Psoas muscle (tissue), 8 donors: ENCODE measurements at regions of chr12 and their contacts with region 1.

Region 1: DNA sequence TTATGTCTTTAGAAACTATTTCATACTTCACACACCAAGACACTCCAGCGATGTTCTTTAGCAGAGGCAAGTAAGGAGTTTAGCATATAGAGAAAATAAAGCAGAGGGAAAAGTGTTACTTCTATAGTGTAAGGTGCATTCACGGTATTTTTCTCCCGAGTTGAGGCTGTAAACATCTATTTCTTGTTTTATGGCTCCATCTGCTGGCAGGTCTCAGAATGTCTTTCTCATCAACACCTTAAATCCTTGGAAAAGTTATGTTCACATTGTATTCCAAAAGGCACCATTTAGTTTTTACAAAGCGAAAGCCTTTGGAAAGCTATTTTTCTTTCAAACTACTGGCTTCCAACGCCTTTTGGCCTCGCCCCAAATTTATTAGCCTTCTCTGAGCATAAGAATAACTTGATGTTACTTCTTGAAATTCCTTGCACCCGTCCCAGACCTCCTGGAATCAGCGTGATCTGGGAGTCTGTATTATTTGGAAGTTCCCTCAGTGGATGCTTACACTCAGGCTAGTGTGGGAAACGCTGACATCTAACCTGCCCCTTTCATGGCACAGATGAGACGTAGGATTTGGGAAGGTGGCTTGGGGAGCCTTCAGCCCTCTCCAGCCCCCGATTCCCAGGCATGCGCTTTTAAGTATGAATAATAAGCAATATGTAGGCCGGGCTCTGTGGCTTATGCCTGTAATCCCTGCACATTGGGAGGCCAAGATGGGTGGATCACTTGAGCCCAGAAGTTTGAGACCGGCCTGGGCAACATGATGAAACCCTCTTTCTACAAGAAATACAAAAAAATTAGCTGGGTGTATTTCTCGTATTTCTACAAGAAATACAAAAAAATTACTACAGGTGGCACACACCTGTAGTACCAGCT is 1.9 kb upstream of the PIWIL1 start:
- DNase-seq: no peak
- ATAC-seq: no peak
- H3K4me3 ChIP-seq: no peak overlapping the region
- H3K27ac ChIP-seq: no peak overlapping the region
- H3K4me1 ChIP-seq: no peaks in the 10 kb centered on the region
- H3K27me3 ChIP-seq: peaks cover 0 to 15% (median 5%) of the 10 kb centered on the region in 3 donors
- CTCF ChIP-seq: peak; percentile 65

Region 2: GRCh38 chr12:130041983-130042812 is 293.6 kb before region 1 on chr12:
- intact Hi-C with region 1: loop called in 1 of 2 experiments (anchors 5 kb)
- DNase-seq: peak; percentile 38 to 68
- ATAC-seq: no peak
- H3K4me3 ChIP-seq: no peak overlapping the region
- H3K27ac ChIP-seq: no peak overlapping the region
- H3K4me1 ChIP-seq: no peaks in the 10 kb centered on the region
- H3K27me3 ChIP-seq: peaks cover 0 to 48% (median 5%) of the 10 kb centered on the region in 3 donors
- CTCF ChIP-seq: peak; percentile 55

Region 3: GRCh38 chr12:130049666-130050065 is 286.1 kb before region 1 on chr12:
- intact Hi-C with region 1: loop called (anchors 2 to 5 kb)
- DNase-seq: no peak
- ATAC-seq: no peak
- H3K4me3 ChIP-seq: no peak overlapping the region
- H3K27ac ChIP-seq: no peak overlapping the region
- H3K4me1 ChIP-seq: no peaks in the 10 kb centered on the region
- H3K27me3 ChIP-seq: peaks cover 0 to 21% (median 3%) of the 10 kb centered on the region in 3 donors
- CTCF ChIP-seq: no peak

Region 4: DNA sequence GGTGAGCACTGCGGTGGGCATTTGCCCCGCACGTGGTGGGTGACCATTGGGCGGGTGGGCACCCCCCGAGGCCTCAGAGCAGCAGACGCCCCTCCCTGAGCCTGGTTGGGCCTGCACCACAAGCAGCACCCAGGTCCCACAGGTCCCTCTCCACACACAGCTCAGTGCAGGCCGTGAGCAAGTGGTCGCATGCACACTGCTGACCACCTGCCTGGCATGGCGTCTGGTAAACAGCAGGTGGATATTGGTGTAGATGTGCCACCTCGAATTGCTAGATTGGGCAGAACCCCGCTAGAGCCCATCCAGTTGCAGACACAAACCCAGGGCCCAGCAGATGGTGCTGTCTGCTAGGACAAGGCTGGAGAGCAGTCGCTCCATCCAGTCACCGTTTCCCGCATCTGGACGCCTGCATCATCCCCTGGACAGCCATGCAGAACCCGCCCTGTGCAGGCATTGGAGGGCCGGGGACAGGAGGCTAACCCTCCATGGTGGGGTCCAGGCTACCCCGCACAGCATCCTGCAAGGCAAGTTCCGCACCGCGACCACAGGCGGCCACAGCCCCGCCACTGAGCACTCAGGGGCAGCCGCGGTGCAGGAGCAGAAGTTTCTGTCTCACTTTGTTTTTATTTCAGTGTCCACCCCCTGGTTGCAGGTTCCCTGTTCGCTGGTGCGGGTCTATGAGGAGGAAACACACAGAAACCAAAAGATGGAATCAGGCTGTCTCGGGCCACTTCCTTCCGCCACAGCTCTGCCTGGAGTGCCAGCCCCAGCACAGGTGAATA is 426.0 kb after region 1 on chr12:
- intact Hi-C with region 1: no loop called
- DNase-seq: peak in 1 of 2 donors; percentile 31
- ATAC-seq: peak in 1 of 4 donors; percentile 63
- H3K4me3 ChIP-seq: no peak overlapping the region
- H3K27ac ChIP-seq: no peak overlapping the region
- H3K4me1 ChIP-seq: no peaks in the 10 kb centered on the region
- H3K27me3 ChIP-seq: peaks cover 0 to 16% (median 0%) of the 10 kb centered on the region in 3 donors
- CTCF ChIP-seq: peak; percentile 33